ENCODE measurements at regions of chr6 and their contacts with region 1.

Region 1: GRCh38 chr6:100664274-100665040 is 199.7 kb upstream of the SIM1 start:
- DNase-seq: peak; percentile 2
- H3K4me3 ChIP-seq: no peak overlapping the region
- H3K27ac ChIP-seq: no peak overlapping the region
- H3K27me3 ChIP-seq: no peaks in the 10 kb centered on the region
- CTCF ChIP-seq: peak; percentile 71

Region 2: DNA sequence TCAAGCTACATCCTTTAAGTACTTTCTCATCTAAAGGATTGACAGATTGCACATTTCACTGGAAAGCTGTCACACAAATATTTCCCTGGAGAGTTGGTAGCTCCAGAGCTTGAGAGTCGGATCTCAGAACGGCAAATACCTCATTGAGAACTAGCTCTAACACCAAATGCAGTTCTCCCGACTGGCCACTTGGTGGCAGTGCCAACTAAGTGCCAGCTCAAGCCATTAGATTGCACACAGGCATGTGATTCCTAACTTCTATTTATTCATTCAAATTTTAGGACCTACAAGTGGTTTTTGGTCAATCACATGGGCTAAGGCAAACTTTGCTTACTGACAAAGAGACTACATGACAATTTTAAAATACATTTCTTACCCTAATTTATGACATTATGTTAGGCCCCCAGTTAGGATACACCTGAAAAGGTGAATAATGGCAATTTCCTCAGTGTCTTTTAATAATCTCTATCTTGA is 662.5 kb before region 1 on chr6:
- CTCF ChIA-PET with region 1: interaction called, 17 read pairs
- POLR2A ChIA-PET with region 1: no interaction called
- DNase-seq: peak; percentile 21
- H3K4me3 ChIP-seq: no peak overlapping the region
- H3K27ac ChIP-seq: no peak overlapping the region
- H3K27me3 ChIP-seq: peaks cover 5% of the 10 kb centered on the region
- CTCF ChIP-seq: peak; percentile 95

Region 3: DNA sequence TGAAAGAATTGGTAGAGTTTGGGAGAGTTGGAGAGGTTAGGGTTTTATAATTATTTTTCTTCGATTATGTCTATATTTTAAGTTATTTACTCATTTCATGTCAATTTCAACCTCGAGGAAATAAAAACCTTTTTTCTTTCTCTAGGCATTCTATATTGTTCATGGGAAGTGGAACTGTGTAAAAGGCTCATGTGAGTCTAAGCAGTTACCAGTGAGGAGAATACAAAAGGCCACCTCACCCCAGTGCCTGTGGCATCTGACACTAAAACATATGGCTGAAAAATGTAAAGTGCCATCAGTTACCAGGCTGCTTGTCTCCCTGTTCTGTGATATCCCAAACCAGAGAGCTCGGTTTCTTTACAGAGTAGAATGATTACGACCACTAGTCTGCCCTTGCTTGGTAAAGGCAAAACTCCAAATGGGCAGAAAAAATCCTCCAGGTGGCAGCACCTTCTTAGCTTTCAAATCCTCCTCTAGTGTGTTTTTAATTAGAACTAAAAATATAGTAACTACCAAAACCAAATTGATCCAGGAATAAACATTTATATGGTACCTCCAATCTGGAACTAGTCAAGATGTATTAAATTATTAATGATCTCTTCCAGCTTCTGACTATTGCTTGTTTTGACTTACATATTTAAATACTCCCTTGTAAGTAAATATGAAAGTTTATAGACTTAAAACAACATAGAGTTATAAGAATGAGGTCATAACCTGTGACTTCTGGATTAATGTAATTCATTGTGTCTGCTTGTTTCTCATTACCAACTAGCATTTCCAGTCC is 547.9 kb before region 1 on chr6:
- CTCF ChIA-PET with region 1: interaction called, 33 read pairs
- POLR2A ChIA-PET with region 1: no interaction called
- DNase-seq: peak; percentile 52
- H3K4me3 ChIP-seq: no peak overlapping the region
- H3K27ac ChIP-seq: no peak overlapping the region
- H3K27me3 ChIP-seq: peaks cover 30% of the 10 kb centered on the region
- CTCF ChIP-seq: peak; percentile 83

Region 4: GRCh38 chr6:100678027-100678426 is 13.6 kb after region 1 on chr6:
- CTCF ChIA-PET with region 1: interaction called, 37 read pairs
- POLR2A ChIA-PET with region 1: no interaction called
- DNase-seq: no peak
- H3K4me3 ChIP-seq: no peak overlapping the region
- H3K27ac ChIP-seq: no peak overlapping the region
- H3K27me3 ChIP-seq: no peaks in the 10 kb centered on the region
- CTCF ChIP-seq: 0 out of 2 replicates have a peak, but pooled peaks have one; percentile 20

Region 5: DNA sequence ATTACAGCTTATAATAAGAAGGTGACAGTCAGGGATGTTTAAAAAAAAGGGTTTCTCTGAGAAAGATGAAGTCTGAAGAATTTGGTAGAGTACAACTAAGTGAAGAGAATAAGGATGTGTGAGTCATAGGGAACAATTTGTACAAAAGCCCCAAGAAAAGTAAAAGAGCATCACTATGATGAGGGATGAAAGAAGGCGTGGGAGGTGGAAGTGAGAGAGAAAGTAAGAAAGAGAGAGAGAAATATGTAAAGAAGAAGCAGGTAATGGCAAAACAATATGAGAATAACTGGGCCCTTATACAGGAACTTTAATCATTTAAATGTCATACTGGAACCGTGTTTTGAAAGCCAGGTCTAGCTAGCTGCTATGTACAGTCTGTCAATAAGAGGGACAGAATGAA is 37.3 kb after region 1 on chr6:
- CTCF ChIA-PET with region 1: interaction called, 12 read pairs
- POLR2A ChIA-PET with region 1: no interaction called
- DNase-seq: no peak
- H3K4me3 ChIP-seq: no peak overlapping the region
- H3K27ac ChIP-seq: no peak overlapping the region
- H3K27me3 ChIP-seq: no peaks in the 10 kb centered on the region
- CTCF ChIP-seq: no peak

Region 6: GRCh38 chr6:100763617-100764241 is 99.3 kb after region 1 on chr6:
- CTCF ChIA-PET with region 1: no interaction called
- POLR2A ChIA-PET with region 1: no interaction called
- DNase-seq: no peak
- H3K4me3 ChIP-seq: no peak overlapping the region
- H3K27ac ChIP-seq: no peak overlapping the region
- H3K27me3 ChIP-seq: no peaks in the 10 kb centered on the region
- CTCF ChIP-seq: no peak